Ovary (tissue), 10 donors: ENCODE measurements at regions of chr18 and their contacts with region 1.

Region 1: DNA sequence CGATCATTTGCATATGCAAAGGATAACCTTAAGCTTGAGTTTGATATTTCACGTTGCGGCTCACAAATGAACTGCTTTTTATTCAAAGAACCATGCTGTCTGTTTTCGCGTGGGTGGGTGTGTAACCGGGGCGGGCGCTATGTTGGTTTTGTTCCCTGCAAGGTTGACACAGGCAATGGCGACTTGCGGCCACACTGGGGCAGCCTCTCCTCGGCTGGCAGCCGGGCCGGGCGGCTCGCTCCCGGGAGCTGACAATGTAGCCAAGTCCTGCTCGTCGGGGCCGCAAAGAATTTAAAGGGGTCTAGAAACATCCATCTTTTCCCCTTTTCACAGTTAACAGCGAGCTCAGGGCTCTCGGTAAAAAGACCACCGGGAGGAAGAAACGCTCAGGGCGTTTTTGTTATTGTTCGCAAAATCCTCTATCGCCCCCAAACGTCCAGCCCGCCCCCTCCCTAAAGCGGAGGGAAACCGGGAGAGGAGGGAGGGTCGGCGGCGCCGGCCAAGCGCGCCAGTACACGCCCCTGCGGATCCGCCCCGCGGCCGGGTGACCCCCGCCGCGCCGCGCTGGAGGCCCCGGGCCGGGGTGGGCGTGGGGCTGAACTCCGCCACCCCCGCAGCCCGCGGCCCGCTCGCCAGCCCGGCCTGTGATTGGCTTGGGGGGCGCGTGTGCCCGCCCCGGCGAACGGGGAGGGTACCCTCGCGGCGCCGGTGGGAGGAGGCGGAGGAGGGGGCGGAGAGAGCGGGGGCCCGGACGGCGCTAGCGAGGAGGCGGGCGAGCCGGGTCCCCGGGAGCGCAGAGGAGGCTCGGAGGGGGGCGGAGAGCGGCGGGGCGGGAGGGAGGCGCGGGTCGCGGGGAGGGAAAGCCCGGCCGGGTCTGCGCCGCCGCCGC is at the start of gene NEDD4L:
- DNase-seq: peak; percentile 74 to 85 (median 82)
- H3K4me3 ChIP-seq: peak within 1 kb of the TSS; percentile 80
- H3K27ac ChIP-seq: peak within 1 kb of the TSS; percentile 67 to 86
- H3K4me1 ChIP-seq: peaks cover 7% of the 10 kb centered on the region
- H3K27me3 ChIP-seq: no peaks in the 10 kb centered on the region
- CTCF ChIP-seq: peak; percentile 67 to 76 (median 69)
- EP300 ChIP-seq: no peak
- POLR2A ChIP-seq: no peak
- total RNA-seq, gene NEDD4L: 11.1 to 75.2 (median 20.6) TPM

Region 2: DNA sequence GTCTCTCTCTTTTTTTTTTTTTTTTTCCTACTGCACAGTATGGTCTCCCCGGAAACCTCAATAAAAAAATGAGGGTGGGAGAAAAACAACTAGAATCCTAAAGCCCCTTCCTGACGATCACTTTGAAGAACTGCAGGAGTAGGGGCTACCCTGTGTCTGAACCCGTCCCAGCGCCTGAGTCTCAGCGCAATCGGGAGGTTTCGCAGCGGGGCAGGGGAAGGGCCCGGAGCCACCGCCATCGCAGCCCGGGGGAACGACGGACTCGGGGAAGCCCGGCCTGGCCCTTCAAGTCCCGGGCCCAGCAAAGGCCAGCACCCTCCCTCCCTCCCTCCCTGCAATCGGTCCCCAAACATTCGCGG is 422.5 kb before region 1 on chr18:
- intact Hi-C with region 1: loop called in 1 of 4 experiments (anchors 10 kb)
- DNase-seq: no peak
- H3K4me3 ChIP-seq: peak overlapping the region; percentile 52
- H3K27ac ChIP-seq: peak overlapping the region in 1 of 2 donors; percentile 59
- H3K4me1 ChIP-seq: no peaks in the 10 kb centered on the region
- H3K27me3 ChIP-seq: no peaks in the 10 kb centered on the region
- CTCF ChIP-seq: no peak
- EP300 ChIP-seq: no peak
- POLR2A ChIP-seq: no peak

Region 3: DNA sequence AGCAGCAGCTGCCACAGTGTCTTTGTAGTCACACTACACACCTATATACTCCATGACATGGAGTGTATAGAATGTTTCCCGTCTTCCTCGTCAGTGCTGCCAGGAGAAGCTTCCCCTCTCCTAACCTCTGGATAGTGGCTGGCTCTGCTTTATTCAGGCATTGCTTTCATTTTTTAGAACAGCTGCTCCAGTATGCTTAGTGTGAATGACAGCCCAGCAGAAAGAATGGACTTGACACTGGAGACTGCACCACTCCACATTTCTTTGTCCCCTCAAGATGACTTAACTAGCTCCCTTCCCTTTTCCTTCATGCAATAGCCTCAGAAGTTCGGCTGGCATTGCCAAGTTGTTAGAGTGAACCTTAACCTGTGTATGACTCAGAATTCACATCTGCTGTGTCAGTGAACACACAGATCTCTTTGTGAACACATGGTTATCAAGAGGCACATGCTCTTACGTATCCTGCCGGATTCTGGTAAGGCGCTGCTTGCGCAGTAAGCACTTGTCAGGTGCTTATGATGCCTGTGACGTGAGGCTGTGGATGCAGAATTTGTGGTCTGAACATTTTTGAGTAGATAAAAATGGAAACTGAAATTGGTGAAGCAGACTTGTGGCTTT is 74.2 kb after region 1 on chr18:
- intact Hi-C with region 1: loop called in 2 of 4 experiments (anchors 2 to 10 kb)
- DNase-seq: peak; percentile 42 to 63 (median 50)
- H3K4me3 ChIP-seq: no peak overlapping the region
- H3K27ac ChIP-seq: no peak overlapping the region
- H3K4me1 ChIP-seq: peaks cover 1% of the 10 kb centered on the region
- H3K27me3 ChIP-seq: no peaks in the 10 kb centered on the region
- CTCF ChIP-seq: no peak
- EP300 ChIP-seq: no peak
- POLR2A ChIP-seq: no peak

Region 4: GRCh38 chr18:58128381-58129374 is 84.9 kb after region 1 on chr18:
- intact Hi-C with region 1: loop called in 2 of 4 experiments (anchors 2 to 10 kb)
- DNase-seq: no peak
- H3K4me3 ChIP-seq: no peak overlapping the region
- H3K27ac ChIP-seq: no peak overlapping the region
- H3K4me1 ChIP-seq: no peaks in the 10 kb centered on the region
- H3K27me3 ChIP-seq: no peaks in the 10 kb centered on the region
- CTCF ChIP-seq: no peak
- EP300 ChIP-seq: no peak
- POLR2A ChIP-seq: no peak

Region 5: DNA sequence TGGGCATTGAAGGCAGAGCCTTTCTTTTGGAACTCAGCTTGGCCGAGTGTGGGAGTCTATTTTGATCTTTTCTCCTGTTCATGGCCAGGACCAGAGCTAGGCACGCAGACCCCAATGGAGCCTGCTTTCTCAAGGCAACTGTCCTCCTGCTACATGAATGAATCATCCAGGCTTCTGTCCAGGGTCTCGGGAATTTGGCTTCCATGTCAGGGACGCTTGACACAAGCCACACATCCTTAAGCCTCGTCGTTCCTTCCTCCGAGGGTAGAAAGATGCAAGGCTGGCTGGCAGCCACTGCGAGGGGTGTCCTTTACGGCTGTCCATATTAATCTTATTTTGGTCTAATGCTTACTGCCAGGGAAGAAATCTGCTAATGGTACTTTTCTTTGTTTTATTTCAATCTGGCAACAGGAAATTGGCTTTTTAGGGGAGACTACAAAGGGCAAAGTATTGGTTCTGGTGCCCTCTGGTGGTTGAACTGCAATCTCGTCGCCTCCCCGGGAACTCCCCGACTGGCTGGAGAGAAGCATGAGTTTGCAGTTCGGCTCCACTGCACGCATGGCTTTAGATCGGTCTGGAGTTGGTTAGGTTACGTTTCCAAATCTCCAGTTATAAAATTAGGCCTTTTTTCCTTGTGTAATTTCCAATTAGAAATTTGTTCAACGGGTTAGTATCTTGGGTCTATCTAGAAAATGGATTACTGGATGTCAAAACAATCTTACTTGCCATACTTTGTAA is 449.9 kb after region 1 on chr18:
- intact Hi-C with region 1: loop called in 2 of 4 experiments (anchors 10 kb)
- DNase-seq: peak; percentile 73 to 82 (median 80)
- H3K4me3 ChIP-seq: no peak overlapping the region
- H3K27ac ChIP-seq: peak overlapping the region in 1 of 2 donors; percentile 36
- H3K4me1 ChIP-seq: peaks cover 1% of the 10 kb centered on the region
- H3K27me3 ChIP-seq: no peaks in the 10 kb centered on the region
- CTCF ChIP-seq: peak; percentile 66 to 81 (median 77)
- EP300 ChIP-seq: no peak
- POLR2A ChIP-seq: no peak

Region 6: GRCh38 chr18:58761241-58761969 is 717.7 kb after region 1 on chr18:
- intact Hi-C with region 1: loop called in 3 of 4 experiments (anchors 5 to 10 kb)
- DNase-seq: no peak
- H3K4me3 ChIP-seq: no peak overlapping the region
- H3K27ac ChIP-seq: no peak overlapping the region
- H3K4me1 ChIP-seq: no peaks in the 10 kb centered on the region
- H3K27me3 ChIP-seq: no peaks in the 10 kb centered on the region
- CTCF ChIP-seq: no peak
- EP300 ChIP-seq: no peak
- POLR2A ChIP-seq: no peak

Region 7: DNA sequence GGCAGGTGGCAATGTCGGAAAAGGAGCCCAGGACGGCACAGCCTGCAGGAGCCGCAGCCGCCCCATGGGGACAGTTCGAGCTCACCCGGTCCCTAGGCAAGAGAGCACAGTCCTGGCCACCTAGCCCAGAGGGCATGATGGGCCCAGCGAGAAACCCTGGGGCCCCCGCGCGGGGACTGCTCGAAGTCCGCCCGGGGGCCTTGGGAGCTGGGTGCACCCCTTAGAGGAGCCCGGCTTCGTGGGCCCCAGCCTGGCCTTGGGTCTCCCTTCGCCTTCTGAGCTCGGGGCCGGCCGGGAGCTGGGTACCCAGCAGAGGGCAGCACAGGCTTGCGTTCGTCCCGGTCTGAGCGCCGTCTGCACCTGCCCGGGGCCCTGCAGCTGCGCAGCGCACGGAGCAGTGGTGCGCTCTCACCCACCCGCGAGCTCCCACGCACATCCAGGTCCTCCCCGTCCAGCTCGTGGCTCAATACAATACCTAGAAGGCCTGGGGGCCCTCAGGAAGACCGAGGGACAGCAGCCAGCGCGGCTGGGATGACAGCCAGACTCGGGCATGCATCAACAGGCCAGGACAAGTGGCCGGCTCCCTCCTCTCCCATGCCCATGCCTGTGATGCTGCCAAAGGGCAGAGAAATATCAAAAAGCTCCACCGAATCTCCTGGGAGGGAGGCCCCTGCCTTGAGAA is 724.7 kb after region 1 on chr18:
- intact Hi-C with region 1: loop called in 3 of 4 experiments (anchors 5 to 10 kb)
- DNase-seq: peak; percentile 60 to 83 (median 70)
- H3K4me3 ChIP-seq: peak overlapping the region; percentile 24
- H3K27ac ChIP-seq: no peak overlapping the region
- H3K4me1 ChIP-seq: peaks cover 3% of the 10 kb centered on the region
- H3K27me3 ChIP-seq: no peaks in the 10 kb centered on the region
- CTCF ChIP-seq: peak; percentile 38 to 63 (median 43)
- EP300 ChIP-seq: no peak
- POLR2A ChIP-seq: no peak